ENCODE measurements at regions of chr11 and their contacts with region 1.

Region 1: GRCh38 chr11:6362873-6363678 is 27.2 kb upstream of the SMPD1 start:
- DNase-seq: no peak
- H3K4me3 ChIP-seq: no peak overlapping the region
- H3K27ac ChIP-seq: no peak overlapping the region
- H3K4me1 ChIP-seq: peaks cover 0 to 4% (median under 1%) of the 10 kb centered on the region in 4 donors
- H3K27me3 ChIP-seq: no peaks in the 10 kb centered on the region
- CTCF ChIP-seq: peak; percentile 79 to 91 (median 81)
- EP300 ChIP-seq: no peak
- POLR2A ChIP-seq: no peak

Region 2: GRCh38 chr11:6251120-6251733 is 111.8 kb before region 1 on chr11:
- intact Hi-C with region 1: loop called (anchors 2 kb)
- DNase-seq: no peak
- H3K4me3 ChIP-seq: no peak overlapping the region
- H3K27ac ChIP-seq: peak overlapping the region; percentile 37 to 56 (median 49)
- H3K4me1 ChIP-seq: peaks cover 5 to 10% (median 7%) of the 10 kb centered on the region in 4 donors
- H3K27me3 ChIP-seq: peaks cover 0 to under 1% (median 0%) of the 10 kb centered on the region in 4 donors
- CTCF ChIP-seq: peak; percentile 74 to 97 (median 81)
- EP300 ChIP-seq: no peak
- POLR2A ChIP-seq: no peak

Measured in esophagus muscularis mucosa (tissue), 4 donors.